ENCODE measurements at regions of chr6 and their contacts with region 1.

Region 1: GRCh38 chr6:124961777-124962611 is at the start of gene RNF217:
- DNase-seq: peak; percentile 73 to 87 (median 82)
- H3K4me3 ChIP-seq: peak within 1 kb of the TSS; percentile 47
- H3K27ac ChIP-seq: peak within 1 kb of the TSS; percentile 98 to 99
- H3K4me1 ChIP-seq: peaks cover 4% of the 10 kb centered on the region
- H3K27me3 ChIP-seq: no peaks in the 10 kb centered on the region
- CTCF ChIP-seq: peak in 1 of 3 donors; percentile 3
- EP300 ChIP-seq: no peak
- POLR2A ChIP-seq: peak; percentile 50
- total RNA-seq, gene RNF217: 26.0 to 40.4 (median 35.8) TPM

Region 2: GRCh38 chr6:125099211-125100073 is 137.4 kb after region 1 on chr6:
- intact Hi-C with region 1: loop called in 2 of 4 experiments (anchors 10 kb)
- DNase-seq: peak; percentile 44 to 70 (median 60)
- H3K4me3 ChIP-seq: peak overlapping the region; percentile 50
- H3K27ac ChIP-seq: no peak overlapping the region
- H3K4me1 ChIP-seq: peaks cover 2% of the 10 kb centered on the region
- H3K27me3 ChIP-seq: no peaks in the 10 kb centered on the region
- CTCF ChIP-seq: no peak
- EP300 ChIP-seq: no peak
- POLR2A ChIP-seq: no peak

Measured in ovary (tissue), 10 donors.